WTC11 (cell line): ENCODE measurements at regions of chr1 and their contacts with region 1.

Region 1: DNA sequence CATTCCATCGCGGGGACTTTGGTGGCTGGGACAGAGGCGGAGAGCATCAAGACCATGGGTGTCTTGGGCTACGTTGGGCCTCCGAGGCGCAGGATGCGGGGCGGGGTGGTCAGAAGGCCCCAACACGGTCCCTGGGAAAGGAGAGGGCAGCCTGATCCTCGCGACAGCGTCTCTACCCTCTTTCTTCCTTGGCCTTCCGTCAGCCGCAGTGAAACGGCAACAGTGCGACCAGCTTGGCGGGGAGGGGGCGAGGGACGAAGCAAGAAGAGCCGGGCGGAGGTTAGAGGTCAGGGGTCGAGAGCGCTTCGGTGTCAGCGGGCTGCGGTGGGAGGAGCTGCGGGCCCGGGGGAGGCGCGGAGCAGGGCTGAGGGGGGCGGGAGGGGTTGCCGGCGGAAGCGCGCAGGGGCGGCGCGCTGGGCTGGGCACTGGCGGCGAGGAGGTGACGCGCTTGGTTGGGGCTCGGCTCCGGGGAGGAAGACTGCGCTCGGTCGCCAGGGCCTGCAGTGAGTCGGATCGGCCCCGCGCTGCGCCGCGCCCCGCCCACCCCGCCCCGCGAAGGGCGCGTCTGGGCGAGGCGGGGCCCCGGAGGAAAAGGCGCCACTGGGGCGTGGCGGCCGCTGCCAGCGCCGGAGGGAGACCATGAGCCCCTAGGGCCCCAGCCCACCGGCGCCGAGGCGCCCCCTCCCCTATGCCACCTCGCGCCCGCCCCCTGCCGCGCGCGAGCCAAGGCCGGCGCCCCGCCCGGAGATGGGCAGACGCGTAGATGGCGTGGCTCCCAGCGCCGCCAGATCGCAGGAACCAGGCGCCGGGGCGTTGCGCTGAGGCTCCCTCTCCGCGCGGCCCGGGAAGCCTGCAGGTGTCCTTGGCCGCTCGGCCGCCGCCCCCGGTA is at the start of gene KCNC4:
- DNase-seq: peak; percentile 87
- ATAC-seq: peak; percentile 75
- H3K4me3 Mint-ChIP-seq: peak within 1 kb of the TSS; percentile 82
- H3K27ac Mint-ChIP-seq: peak within 1 kb of the TSS; percentile 92
- H3K4me1 Mint-ChIP-seq: peaks cover 33% of the 10 kb centered on the region
- H3K27me3 Mint-ChIP-seq: peaks cover 22% of the 10 kb centered on the region
- CTCF ChIP-seq: no peak
- total RNA-seq, gene KCNC4: 19.9 to 21.9 TPM (median 21.9 TPM) in 3 replicates

Region 2: DNA sequence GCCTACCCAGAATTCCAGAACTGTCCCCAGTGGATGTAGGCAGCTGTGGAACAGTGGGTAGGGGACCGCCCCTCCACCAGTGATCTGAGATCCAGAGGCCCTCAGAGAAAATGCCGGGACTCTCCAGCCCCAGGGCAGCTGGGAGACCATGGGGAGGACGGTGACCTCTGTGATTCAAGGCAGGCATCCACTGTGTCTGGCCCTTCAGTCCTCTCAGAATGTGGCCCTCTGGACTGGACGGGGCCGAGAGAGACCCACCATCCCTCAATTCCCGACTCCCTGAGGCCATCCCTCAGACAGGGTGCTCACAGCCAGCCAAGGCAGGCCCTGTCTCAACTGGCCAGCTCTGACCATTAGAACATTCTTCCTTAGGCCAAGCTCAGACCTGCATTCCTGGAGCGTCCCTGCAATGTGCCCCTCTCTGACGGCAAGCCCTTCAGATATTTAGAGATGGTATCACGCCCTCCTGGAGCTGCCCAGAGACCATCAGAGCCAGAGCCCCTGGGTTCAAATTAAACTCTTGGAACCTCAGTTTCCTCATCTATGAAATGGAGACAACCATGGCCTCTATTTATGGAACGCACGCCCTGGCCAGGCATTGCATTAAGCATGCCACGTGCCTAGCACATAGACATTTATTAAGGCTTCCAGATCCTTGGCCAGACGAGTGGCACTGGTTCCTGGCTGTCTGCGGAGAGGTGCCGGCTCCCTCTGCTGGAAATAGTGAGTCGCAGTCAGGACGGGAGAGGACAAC is 436.6 kb before region 1 on chr1:
- CTCF ChIA-PET with region 1: no interaction called
- POLR2A ChIA-PET with region 1: no interaction called
- DNase-seq: peak; percentile 73
- ATAC-seq: peak; percentile 83
- H3K4me3 Mint-ChIP-seq: no peak overlapping the region
- H3K27ac Mint-ChIP-seq: no peak overlapping the region
- H3K4me1 Mint-ChIP-seq: peaks cover 5% of the 10 kb centered on the region
- H3K27me3 Mint-ChIP-seq: peaks cover 7% of the 10 kb centered on the region
- CTCF ChIP-seq: peak; percentile 38; the same call in 1 of the 2 replicates

Region 3: GRCh38 chr1:110161877-110162276 is 48.1 kb before region 1 on chr1:
- CTCF ChIA-PET with region 1: no interaction called
- POLR2A ChIA-PET with region 1: no interaction called
- DNase-seq: no peak
- ATAC-seq: no peak
- H3K4me3 Mint-ChIP-seq: no peak overlapping the region
- H3K27ac Mint-ChIP-seq: no peak overlapping the region
- H3K4me1 Mint-ChIP-seq: peaks cover 11% of the 10 kb centered on the region
- H3K27me3 Mint-ChIP-seq: peaks cover 10% of the 10 kb centered on the region
- CTCF ChIP-seq: no peak

Region 4: GRCh38 chr1:110224240-110224995 is 14.5 kb after region 1 on chr1:
- CTCF ChIA-PET with region 1: interaction called, 16 read pairs
- POLR2A ChIA-PET with region 1: interaction called, 3 read pairs
- DNase-seq: no peak
- ATAC-seq: no peak
- H3K4me3 Mint-ChIP-seq: no peak overlapping the region
- H3K27ac Mint-ChIP-seq: peak overlapping the region; percentile 72; the same call in 1 of the 2 replicates
- H3K4me1 Mint-ChIP-seq: peaks cover 14% of the 10 kb centered on the region
- H3K27me3 Mint-ChIP-seq: no peaks in the 10 kb centered on the region
- CTCF ChIP-seq: no peak

Region 5: DNA sequence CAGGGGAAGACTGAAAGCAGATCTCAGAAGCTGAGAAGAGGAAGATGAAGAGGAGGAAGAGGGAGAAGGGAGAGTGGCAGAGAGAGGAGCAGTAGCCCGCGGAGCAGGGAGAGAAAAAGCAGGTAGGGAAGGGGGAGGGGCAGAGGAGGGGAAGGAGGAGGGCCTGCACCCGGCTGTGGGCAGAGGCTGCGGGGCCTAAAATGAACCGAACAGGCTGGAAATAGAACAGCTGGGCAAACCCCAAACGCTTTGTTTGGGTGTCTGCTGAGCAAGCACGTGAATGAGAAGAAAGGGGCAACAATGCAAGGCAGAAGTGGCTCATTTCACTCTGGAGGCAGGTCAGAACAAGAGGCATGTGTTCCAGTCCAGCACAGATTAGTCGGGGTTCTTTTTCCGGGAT is 33.6 kb after region 1 on chr1:
- CTCF ChIA-PET with region 1: interaction called, 31 read pairs
- POLR2A ChIA-PET with region 1: no interaction called
- DNase-seq: peak; percentile 31
- ATAC-seq: peak; percentile 73
- H3K4me3 Mint-ChIP-seq: no peak overlapping the region
- H3K27ac Mint-ChIP-seq: no peak overlapping the region
- H3K4me1 Mint-ChIP-seq: peaks cover 39% of the 10 kb centered on the region
- H3K27me3 Mint-ChIP-seq: peaks cover 16% of the 10 kb centered on the region; the same call in 1 of the 2 replicates
- CTCF ChIP-seq: no peak

Region 6: DNA sequence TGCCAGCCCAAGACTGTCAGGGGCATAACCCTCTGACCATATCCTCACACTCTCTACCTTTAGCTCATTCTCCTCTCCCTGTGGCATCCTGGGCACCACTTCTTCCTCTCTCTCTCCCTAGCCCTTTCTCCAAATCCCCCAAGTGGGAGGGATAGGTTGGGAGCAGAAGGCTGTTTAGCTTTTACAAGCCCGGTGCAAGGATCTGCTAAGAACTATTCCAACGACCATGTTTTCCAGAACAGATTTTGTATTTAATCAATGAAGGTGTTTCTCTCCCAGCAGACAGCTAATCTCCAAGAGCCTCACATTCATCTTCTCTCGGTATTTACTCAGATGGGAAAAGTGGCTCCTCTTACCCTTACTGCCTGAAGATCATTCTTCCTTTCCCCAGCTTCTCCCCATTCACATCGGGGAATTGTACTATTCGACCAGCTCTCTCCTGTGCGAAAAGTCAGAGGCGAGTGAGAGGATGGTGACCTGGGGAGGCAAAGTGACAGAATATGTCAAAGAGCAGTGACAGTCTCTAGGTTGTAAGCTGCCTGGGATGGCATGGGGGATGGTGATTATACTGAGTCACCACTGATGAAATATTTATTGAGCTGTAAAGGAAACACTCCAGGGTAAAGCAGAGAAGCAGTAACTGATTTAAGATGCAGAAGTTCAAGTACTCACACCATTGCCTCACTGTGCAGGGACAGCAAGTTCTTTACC is 82.2 kb after region 1 on chr1:
- CTCF ChIA-PET with region 1: interaction called, 24 read pairs
- POLR2A ChIA-PET with region 1: no interaction called
- DNase-seq: no peak
- ATAC-seq: no peak
- H3K4me3 Mint-ChIP-seq: no peak overlapping the region
- H3K27ac Mint-ChIP-seq: no peak overlapping the region
- H3K4me1 Mint-ChIP-seq: peaks cover 12% of the 10 kb centered on the region
- H3K27me3 Mint-ChIP-seq: no peaks in the 10 kb centered on the region; the same call in 1 of the 2 replicates
- CTCF ChIP-seq: no peak

Region 7: GRCh38 chr1:110312188-110313121 is 102.5 kb after region 1 on chr1:
- CTCF ChIA-PET with region 1: interaction called, 759 read pairs
- POLR2A ChIA-PET with region 1: interaction called, 12 read pairs
- DNase-seq: peak; percentile 80
- ATAC-seq: peak; percentile 96
- H3K4me3 Mint-ChIP-seq: peak overlapping the region; percentile 54
- H3K27ac Mint-ChIP-seq: no peak overlapping the region; the same call in 1 of the 2 replicates
- H3K4me1 Mint-ChIP-seq: peaks cover 24% of the 10 kb centered on the region
- H3K27me3 Mint-ChIP-seq: no peaks in the 10 kb centered on the region
- CTCF ChIP-seq: peak; percentile 77

Region 8: DNA sequence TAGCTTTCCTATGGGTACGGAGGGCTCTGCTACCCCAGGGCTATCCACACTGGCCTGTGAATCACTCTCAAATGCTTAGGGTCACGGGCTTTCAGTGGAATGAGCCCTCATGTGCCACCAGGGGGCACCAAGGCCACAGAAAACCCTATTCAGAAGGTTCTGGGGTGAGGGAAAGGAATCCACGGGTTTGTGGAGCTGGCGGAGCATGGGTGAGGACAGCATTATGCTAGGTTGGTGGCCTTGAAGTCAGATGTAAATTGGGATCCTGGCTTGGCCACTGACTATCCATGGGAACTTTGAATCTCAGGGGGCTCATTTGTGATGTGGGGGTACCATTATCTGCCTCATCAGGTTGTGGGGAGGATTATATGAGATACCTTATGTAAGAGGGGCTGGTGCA is 202.6 kb after region 1 on chr1:
- CTCF ChIA-PET with region 1: interaction called, 21 read pairs
- POLR2A ChIA-PET with region 1: no interaction called
- DNase-seq: peak; percentile 82
- ATAC-seq: peak; percentile 78
- H3K4me3 Mint-ChIP-seq: no peak overlapping the region
- H3K27ac Mint-ChIP-seq: no peak overlapping the region
- H3K4me1 Mint-ChIP-seq: peaks cover 23% of the 10 kb centered on the region
- H3K27me3 Mint-ChIP-seq: peaks cover 2% of the 10 kb centered on the region; the same call in 1 of the 2 replicates
- CTCF ChIP-seq: peak; percentile 55; the same call in 1 of the 2 replicates

Region 9: GRCh38 chr1:110482662-110483307 is 272.8 kb after region 1 on chr1:
- CTCF ChIA-PET with region 1: interaction called, 14 read pairs
- POLR2A ChIA-PET with region 1: no interaction called
- DNase-seq: no peak
- ATAC-seq: peak; percentile 72
- H3K4me3 Mint-ChIP-seq: no peak overlapping the region
- H3K27ac Mint-ChIP-seq: no peak overlapping the region
- H3K4me1 Mint-ChIP-seq: peaks cover 34% of the 10 kb centered on the region
- H3K27me3 Mint-ChIP-seq: no peaks in the 10 kb centered on the region; the same call in 1 of the 2 replicates
- CTCF ChIP-seq: no peak